Activated CD4-positive, alpha-beta memory T cell treated with anti-CD3 and anti-CD28 coated beads for 36 hours (primary cell): ENCODE measurements at regions of chr14 and their contacts with region 1.

Region 1: GRCh38 chr14:68312884-68313610 is 479.8 kb downstream of the ZFP36L1 start:
- DNase-seq: peak; percentile 75
- H3K4me3 Mint-ChIP-seq: no peak overlapping the region
- H3K27ac Mint-ChIP-seq: no peak overlapping the region
- H3K4me1 Mint-ChIP-seq: peaks cover 32% of the 10 kb centered on the region
- H3K27me3 Mint-ChIP-seq: peaks cover 3% of the 10 kb centered on the region

Region 2: DNA sequence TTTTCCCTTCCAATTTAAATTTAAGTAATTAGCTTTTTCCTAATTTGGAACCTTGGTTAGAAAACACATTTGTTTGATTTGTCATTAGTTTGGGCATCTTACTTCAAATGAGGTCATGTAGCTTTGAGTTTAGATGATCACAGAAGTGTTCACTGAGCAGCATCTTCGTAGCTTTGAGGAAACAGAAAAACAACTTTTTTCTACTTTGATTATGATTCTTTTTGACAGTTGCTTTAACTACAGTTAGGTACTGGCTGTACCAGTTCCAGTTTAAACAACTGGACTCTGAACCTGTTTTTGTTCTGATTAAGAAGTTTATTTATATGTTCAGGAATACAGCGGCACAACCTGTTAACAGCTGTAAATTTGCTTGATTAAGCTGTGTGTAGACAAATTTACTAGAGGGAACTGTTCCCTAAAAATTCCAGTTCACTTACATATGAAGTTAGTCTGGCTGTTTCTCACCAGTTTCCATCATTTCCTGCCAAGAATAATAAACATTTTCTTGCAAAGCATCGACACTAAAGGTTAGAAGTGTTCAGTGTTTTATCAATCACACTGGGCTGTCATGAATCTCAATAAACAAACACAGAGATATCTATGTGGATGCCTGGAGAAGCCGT is 301.5 kb before region 1 on chr14:
- CTCF ChIA-PET with region 1: no interaction called
- POLR2A ChIA-PET with region 1: no interaction called
- intact Hi-C with region 1: no loop called
- DNase-seq: no peak
- H3K4me3 Mint-ChIP-seq: no peak overlapping the region
- H3K27ac Mint-ChIP-seq: no peak overlapping the region
- H3K4me1 Mint-ChIP-seq: no peaks in the 10 kb centered on the region
- H3K27me3 Mint-ChIP-seq: no peaks in the 10 kb centered on the region

Region 3: GRCh38 chr14:68147303-68147702 is 165.7 kb before region 1 on chr14:
- CTCF ChIA-PET with region 1: no interaction called
- POLR2A ChIA-PET with region 1: no interaction called
- intact Hi-C with region 1: no loop called
- DNase-seq: no peak
- H3K4me3 Mint-ChIP-seq: no peak overlapping the region
- H3K27ac Mint-ChIP-seq: no peak overlapping the region
- H3K4me1 Mint-ChIP-seq: peaks cover 13% of the 10 kb centered on the region
- H3K27me3 Mint-ChIP-seq: no peaks in the 10 kb centered on the region

Region 4: GRCh38 chr14:68349900-68350629 is 37.0 kb after region 1 on chr14:
- CTCF ChIA-PET with region 1: no interaction called
- POLR2A ChIA-PET with region 1: no interaction called
- intact Hi-C with region 1: no loop called
- DNase-seq: no peak
- H3K4me3 Mint-ChIP-seq: no peak overlapping the region
- H3K27ac Mint-ChIP-seq: no peak overlapping the region
- H3K4me1 Mint-ChIP-seq: no peaks in the 10 kb centered on the region
- H3K27me3 Mint-ChIP-seq: no peaks in the 10 kb centered on the region

Region 5: DNA sequence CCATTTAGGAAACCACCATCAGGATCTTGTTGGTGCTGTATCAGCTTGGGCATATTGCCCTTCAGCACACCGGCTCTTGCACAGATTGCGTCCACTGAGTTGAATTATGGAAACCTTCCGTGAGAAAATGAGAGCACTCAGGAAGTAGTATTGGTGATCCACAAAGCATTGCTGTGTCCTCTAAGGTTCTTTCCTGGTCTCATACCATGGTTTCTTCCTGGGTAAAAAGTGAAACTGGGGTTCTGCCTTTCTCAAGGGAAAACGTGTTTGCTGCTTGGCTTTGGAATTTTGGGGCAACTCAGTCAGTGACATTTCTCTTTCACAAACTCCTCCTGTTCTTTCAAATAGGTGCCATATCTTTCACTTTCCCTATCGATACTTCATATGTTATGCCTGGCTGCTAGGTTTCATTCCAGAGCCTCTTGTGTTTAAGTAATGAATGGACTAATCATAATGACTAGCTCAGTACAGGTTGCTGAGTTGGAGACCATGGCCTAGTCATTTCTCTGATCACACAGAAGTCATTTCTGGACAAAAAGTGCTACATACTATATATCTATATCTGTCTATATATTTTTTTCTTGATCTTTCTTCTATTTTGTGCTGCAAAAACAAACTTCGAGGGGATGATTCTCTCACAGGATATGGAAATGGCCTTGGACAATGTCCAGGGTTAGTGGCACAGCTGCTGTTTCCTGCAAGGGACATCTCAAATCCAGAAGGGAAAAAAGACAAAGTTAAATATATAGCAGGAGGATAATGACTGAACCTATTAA is 56.4 kb after region 1 on chr14:
- CTCF ChIA-PET with region 1: no interaction called
- POLR2A ChIA-PET with region 1: interaction called, 3 read pairs
- intact Hi-C with region 1: loop called (anchors 2 kb)
- DNase-seq: no peak
- H3K4me3 Mint-ChIP-seq: peak overlapping the region; percentile 33
- H3K27ac Mint-ChIP-seq: peak overlapping the region; percentile 9
- H3K4me1 Mint-ChIP-seq: peaks cover 32% of the 10 kb centered on the region
- H3K27me3 Mint-ChIP-seq: no peaks in the 10 kb centered on the region

Region 6: GRCh38 chr14:68795597-68796417 is 482.8 kb after region 1 on chr14:
- CTCF ChIA-PET with region 1: no interaction called
- POLR2A ChIA-PET with region 1: no interaction called
- intact Hi-C with region 1: no loop called
- DNase-seq: peak; percentile 87
- H3K4me3 Mint-ChIP-seq: peak overlapping the region; percentile 89
- H3K27ac Mint-ChIP-seq: peak overlapping the region; percentile 99
- H3K4me1 Mint-ChIP-seq: peaks cover 48% of the 10 kb centered on the region
- H3K27me3 Mint-ChIP-seq: no peaks in the 10 kb centered on the region